ENCODE measurements at regions of chr2 and their contacts with region 1.

Region 1: GRCh38 chr2:38508311-38509039 is 94.3 kb downstream of the HNRNPLL start:
- DNase-seq: peak; percentile 57 to 82 (median 61)
- H3K4me3 ChIP-seq: no peak overlapping the region
- H3K4me3 Mint-ChIP-seq: peak overlapping the region in 1 of 7 donors; percentile 20
- H3K27ac ChIP-seq: no peak overlapping the region
- H3K27ac Mint-ChIP-seq: peak overlapping the region in 1 of 8 donors; percentile 6
- H3K4me1 ChIP-seq: no peaks in the 10 kb centered on the region
- H3K4me1 Mint-ChIP-seq: peaks cover 0 to 6% (median 5%) of the 10 kb centered on the region in 3 donors
- H3K27me3 ChIP-seq: no peaks in the 10 kb centered on the region
- H3K27me3 Mint-ChIP-seq: peaks cover 7 to 9% of the 10 kb centered on the region in 2 donors

Region 2: GRCh38 chr2:38315707-38316333 is 192.7 kb before region 1 on chr2:
- CTCF ChIA-PET with region 1: interaction called, 63 read pairs
- POLR2A ChIA-PET with region 1: no interaction called
- DNase-seq: peak in 2 of 5 donors; percentile 14 to 35
- H3K4me3 ChIP-seq: no peak overlapping the region
- H3K4me3 Mint-ChIP-seq: no peak overlapping the region
- H3K27ac ChIP-seq: no peak overlapping the region
- H3K27ac Mint-ChIP-seq: no peak overlapping the region
- H3K4me1 ChIP-seq: no peaks in the 10 kb centered on the region
- H3K4me1 Mint-ChIP-seq: no peaks in the 10 kb centered on the region
- H3K27me3 ChIP-seq: no peaks in the 10 kb centered on the region
- H3K27me3 Mint-ChIP-seq: no peaks in the 10 kb centered on the region

Region 3: GRCh38 chr2:38377050-38377828 is 131.2 kb before region 1 on chr2 and contains the start of gene ATL2:
- CTCF ChIA-PET with region 1: interaction called, 11 read pairs
- POLR2A ChIA-PET with region 1: no interaction called
- DNase-seq: peak; percentile 89 to 95 (median 91)
- H3K4me3 ChIP-seq: peak within 1 kb of the TSS; percentile 72
- H3K4me3 Mint-ChIP-seq: peak within 1 kb of the TSS; percentile 94 to 98 (median 95)
- H3K27ac ChIP-seq: peak within 1 kb of the TSS; percentile 86
- H3K27ac Mint-ChIP-seq: peak within 1 kb of the TSS; percentile 94 to 98 (median 96)
- H3K4me1 ChIP-seq: peaks cover 44% of the 10 kb centered on the region
- H3K4me1 Mint-ChIP-seq: peaks cover 52 to 76% (median 67%) of the 10 kb centered on the region in 3 donors
- H3K27me3 ChIP-seq: no peaks in the 10 kb centered on the region
- H3K27me3 Mint-ChIP-seq: peaks cover 0 to 1% of the 10 kb centered on the region in 2 donors
- total RNA-seq, gene ATL2: 61.5 to 62.4 TPM

Region 4: GRCh38 chr2:38498045-38498481 is 10.4 kb before region 1 on chr2:
- CTCF ChIA-PET with region 1: interaction called, 17 read pairs
- POLR2A ChIA-PET with region 1: no interaction called
- DNase-seq: no peak
- H3K4me3 ChIP-seq: no peak overlapping the region
- H3K4me3 Mint-ChIP-seq: peak overlapping the region in 1 of 7 donors; percentile 67
- H3K27ac ChIP-seq: no peak overlapping the region
- H3K27ac Mint-ChIP-seq: peak overlapping the region in 1 of 8 donors; percentile 18
- H3K4me1 ChIP-seq: no peaks in the 10 kb centered on the region
- H3K4me1 Mint-ChIP-seq: peaks cover 7 to 8% (median 8%) of the 10 kb centered on the region in 3 donors
- H3K27me3 ChIP-seq: no peaks in the 10 kb centered on the region
- H3K27me3 Mint-ChIP-seq: peaks cover 9 to 22% of the 10 kb centered on the region in 2 donors